ENCODE measurements at regions of chr12 and their contacts with region 1.

Region 1: DNA sequence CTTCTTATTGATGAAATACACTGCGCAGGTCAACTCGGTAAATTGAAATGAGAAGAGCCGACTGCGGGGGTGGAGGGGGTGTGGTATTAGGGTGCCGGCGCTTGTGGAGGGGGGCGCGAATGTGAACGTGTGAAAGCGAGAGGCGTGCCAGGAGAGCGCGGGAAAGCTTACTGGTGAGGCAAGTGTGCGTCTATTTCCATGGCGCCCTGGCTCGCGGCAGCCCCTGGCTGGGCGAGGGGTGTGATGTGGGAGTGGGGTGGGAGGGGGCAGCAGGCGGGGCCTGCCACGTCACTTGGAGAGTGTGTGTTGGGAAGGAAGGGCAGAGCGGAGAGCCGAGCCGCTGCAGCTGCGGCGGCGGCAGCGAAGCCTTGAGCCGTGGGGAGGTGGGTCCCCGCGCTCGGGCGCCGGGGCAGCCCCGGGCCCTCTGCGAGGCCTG is 88.8 kb downstream of the GALNT8 start:
- DNase-seq: no peak
- H3K4me3 Mint-ChIP-seq: no peak overlapping the region
- H3K27ac Mint-ChIP-seq: no peak overlapping the region
- H3K4me1 Mint-ChIP-seq: peaks cover 45% of the 10 kb centered on the region
- H3K27me3 Mint-ChIP-seq: no peaks in the 10 kb centered on the region

Region 2: DNA sequence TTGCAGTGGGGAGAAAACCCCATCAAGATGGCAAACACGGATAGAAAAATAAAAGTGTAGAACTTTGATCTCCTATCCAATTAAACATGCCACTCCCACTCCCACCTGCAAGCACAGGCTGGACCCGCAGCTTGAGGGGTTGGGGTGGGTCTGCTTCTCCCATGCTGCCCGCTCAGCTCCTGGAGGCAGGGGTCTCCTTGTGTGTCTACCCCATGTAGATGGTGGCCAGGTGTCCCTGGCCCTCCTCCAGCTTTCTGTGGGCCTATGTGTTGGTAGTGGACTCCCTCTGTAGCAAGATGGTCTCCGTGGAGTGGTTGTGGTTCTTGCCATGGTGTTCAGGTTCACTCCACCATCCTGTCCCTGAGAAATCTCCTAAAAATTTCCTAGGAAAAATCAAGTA is 406.0 kb before region 1 on chr12:
- intact Hi-C with region 1: no loop called
- DNase-seq: no peak
- H3K4me3 Mint-ChIP-seq: no peak overlapping the region
- H3K27ac Mint-ChIP-seq: no peak overlapping the region
- H3K4me1 Mint-ChIP-seq: no peaks in the 10 kb centered on the region
- H3K27me3 Mint-ChIP-seq: peaks cover 26% of the 10 kb centered on the region

Region 3: DNA sequence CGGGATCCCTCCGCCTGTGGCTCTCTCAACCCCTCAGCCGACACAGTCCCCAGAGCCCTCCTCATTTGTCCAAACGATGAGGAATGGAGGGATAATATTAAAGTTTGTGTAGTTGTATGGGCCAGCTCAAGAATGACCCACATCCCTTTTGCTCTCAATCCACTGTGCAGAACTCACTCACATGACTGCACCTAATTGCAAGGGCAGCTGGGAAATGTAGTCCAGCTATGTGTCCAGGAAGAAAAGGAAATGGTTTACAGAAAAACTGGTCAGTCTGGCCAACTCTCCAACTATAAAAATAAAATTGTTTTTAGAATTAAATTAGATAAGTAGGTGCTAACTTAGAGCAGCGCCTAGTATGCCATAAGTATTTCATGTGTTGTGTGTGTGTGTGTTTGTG is 22.2 kb before region 1 on chr12:
- intact Hi-C with region 1: no loop called
- DNase-seq: no peak
- H3K4me3 Mint-ChIP-seq: no peak overlapping the region
- H3K27ac Mint-ChIP-seq: no peak overlapping the region
- H3K4me1 Mint-ChIP-seq: no peaks in the 10 kb centered on the region
- H3K27me3 Mint-ChIP-seq: peaks cover 10% of the 10 kb centered on the region

Region 4: DNA sequence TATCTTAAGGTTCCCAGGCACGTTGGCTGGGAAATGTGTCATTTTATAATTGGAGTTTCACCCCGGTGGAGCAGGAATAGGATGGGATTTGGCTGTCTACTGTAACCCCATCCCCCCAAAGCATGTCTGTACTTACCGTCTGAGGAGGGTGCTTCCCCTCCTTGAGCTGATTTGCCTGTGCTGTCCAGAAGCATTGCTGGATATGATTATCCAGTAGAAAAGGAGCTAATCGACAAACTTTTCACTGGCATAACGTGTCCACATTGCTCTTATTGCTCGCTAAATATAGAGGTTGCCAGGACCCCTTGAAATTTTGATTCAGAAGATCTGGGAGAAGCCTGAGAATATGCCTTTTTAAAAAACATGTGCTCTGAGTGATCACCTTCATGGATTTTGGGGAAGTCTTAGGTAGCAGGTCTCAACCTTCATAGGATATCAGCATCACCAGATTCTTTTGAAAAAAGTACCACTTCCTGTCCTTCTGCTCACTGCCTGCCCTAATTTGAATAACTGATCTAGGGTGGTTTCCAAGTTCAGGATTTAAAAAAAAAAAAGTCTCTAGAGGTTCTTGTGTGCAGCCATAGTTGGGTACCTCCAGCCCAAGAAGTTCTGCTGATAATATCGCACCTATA is 20.2 kb after region 1 on chr12:
- intact Hi-C with region 1: loop called (anchors 1 kb)
- DNase-seq: peak; percentile 17
- H3K4me3 Mint-ChIP-seq: peak overlapping the region; percentile 92
- H3K27ac Mint-ChIP-seq: peak overlapping the region; percentile 99
- H3K4me1 Mint-ChIP-seq: peaks cover 77% of the 10 kb centered on the region
- H3K27me3 Mint-ChIP-seq: no peaks in the 10 kb centered on the region

Region 5: GRCh38 chr12:4847713-4848112 is 38.7 kb after region 1 on chr12:
- intact Hi-C with region 1: loop called (anchors 5 kb)
- DNase-seq: no peak
- H3K4me3 Mint-ChIP-seq: no peak overlapping the region
- H3K27ac Mint-ChIP-seq: no peak overlapping the region
- H3K4me1 Mint-ChIP-seq: peaks cover under 1% of the 10 kb centered on the region
- H3K27me3 Mint-ChIP-seq: peaks cover 13% of the 10 kb centered on the region